Endothelial cell of umbilical vein (primary cell): ENCODE measurements at regions of chr1 and their contacts with region 1.

Region 1: GRCh38 chr1:99526926-99527477 is 118.9 kb upstream of the PALMD start:
- DNase-seq: peak; percentile 57
- H3K4me3 ChIP-seq: no peak overlapping the region
- H3K27ac ChIP-seq: no peak overlapping the region
- H3K4me1 ChIP-seq: no peaks in the 10 kb centered on the region
- H3K27me3 ChIP-seq: no peaks in the 10 kb centered on the region
- CTCF ChIP-seq: peak in 1 of 2 donors; percentile 21
- POLR2A ChIP-seq: no peak

Region 2: DNA sequence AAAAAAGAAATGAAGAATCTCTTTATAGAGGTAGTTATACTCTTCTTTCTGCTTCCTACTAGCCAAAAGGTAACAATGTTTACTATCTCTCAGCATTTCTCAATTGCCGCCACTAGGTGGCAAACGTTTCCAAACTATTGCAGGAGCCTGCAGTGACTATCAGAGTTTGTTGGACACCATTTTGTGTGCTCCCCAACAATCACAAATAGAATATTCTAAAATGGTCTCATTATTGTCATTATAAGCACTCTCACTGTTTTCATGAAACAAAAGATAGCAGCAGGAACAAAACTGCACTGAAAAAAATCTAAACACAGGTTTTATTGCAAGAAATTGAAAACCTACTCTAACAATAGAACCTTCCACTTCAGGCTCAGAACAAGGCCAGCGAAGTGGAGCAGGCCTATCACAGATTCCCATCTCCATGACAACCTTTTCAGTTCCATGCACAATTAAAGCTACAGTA is 346.6 kb before region 1 on chr1:
- CTCF ChIA-PET with region 1: interaction called, 20 read pairs
- POLR2A ChIA-PET with region 1: no interaction called
- dilution Hi-C with region 1: no loop called
- intact Hi-C with region 1: loop called (anchors 1 kb)
- DNase-seq: peak; percentile 90
- H3K4me3 ChIP-seq: no peak overlapping the region
- H3K27ac ChIP-seq: no peak overlapping the region
- H3K4me1 ChIP-seq: no peaks in the 10 kb centered on the region
- H3K27me3 ChIP-seq: no peaks in the 10 kb centered on the region
- CTCF ChIP-seq: peak; percentile 57 to 68
- POLR2A ChIP-seq: no peak

Region 3: GRCh38 chr1:99371413-99371812 is 155.6 kb before region 1 on chr1:
- CTCF ChIA-PET with region 1: no interaction called
- POLR2A ChIA-PET with region 1: no interaction called
- dilution Hi-C with region 1: no loop called
- intact Hi-C with region 1: no loop called
- DNase-seq: no peak
- H3K4me3 ChIP-seq: no peak overlapping the region
- H3K27ac ChIP-seq: no peak overlapping the region
- H3K4me1 ChIP-seq: no peaks in the 10 kb centered on the region
- H3K27me3 ChIP-seq: peaks cover 2% of the 10 kb centered on the region in 2 experiments
- CTCF ChIP-seq: no peak
- POLR2A ChIP-seq: no peak

Region 4: GRCh38 chr1:99384021-99384420 is 143.0 kb before region 1 on chr1:
- CTCF ChIA-PET with region 1: no interaction called
- POLR2A ChIA-PET with region 1: no interaction called
- dilution Hi-C with region 1: no loop called
- intact Hi-C with region 1: no loop called
- DNase-seq: no peak
- H3K4me3 ChIP-seq: no peak overlapping the region
- H3K27ac ChIP-seq: no peak overlapping the region
- H3K4me1 ChIP-seq: no peaks in the 10 kb centered on the region
- H3K27me3 ChIP-seq: no peaks in the 10 kb centered on the region
- CTCF ChIP-seq: no peak
- POLR2A ChIP-seq: no peak

Region 5: DNA sequence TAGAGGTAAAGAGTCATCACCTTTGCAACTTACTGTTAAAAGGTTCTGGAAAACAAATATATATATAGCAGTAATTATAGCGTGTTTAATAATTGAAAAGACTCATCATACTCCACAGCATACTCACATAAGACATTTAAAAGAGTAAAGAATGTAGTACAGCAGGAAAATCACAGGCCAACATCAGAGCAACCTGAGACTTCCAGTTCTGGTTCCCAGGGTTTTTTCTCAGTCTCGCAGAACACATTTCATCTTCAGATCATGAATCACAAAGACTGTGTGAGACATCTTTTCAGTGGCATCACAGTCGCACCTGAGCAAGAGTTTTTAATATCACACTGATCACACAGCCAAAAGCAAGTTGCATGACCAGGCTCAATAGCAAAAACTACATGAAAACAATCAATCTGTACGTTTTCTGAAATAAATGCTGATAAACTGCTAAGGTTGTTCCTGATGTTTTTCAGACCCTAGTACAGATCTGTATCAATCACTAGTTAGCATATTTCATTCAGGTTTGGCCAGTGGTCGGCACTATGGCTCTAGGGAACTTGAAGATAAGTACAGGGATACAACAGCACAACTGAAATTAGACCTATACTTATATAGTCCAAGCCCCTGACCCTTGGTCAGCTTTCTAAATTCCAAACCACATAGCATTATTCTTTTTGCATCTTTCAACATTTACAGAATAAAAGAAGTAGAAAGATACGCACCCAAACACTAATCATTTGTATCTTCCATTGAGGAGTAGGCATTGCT is 120.2 kb before region 1 on chr1:
- CTCF ChIA-PET with region 1: no interaction called
- POLR2A ChIA-PET with region 1: no interaction called
- dilution Hi-C with region 1: no loop called
- intact Hi-C with region 1: no loop called
- DNase-seq: peak; percentile 17
- H3K4me3 ChIP-seq: no peak overlapping the region
- H3K27ac ChIP-seq: no peak overlapping the region
- H3K4me1 ChIP-seq: no peaks in the 10 kb centered on the region
- H3K27me3 ChIP-seq: peaks cover 0 to 2% of the 10 kb centered on the region in 2 experiments
- CTCF ChIP-seq: no peak
- POLR2A ChIP-seq: no peak

Region 6: GRCh38 chr1:99496067-99496466 is 30.9 kb before region 1 on chr1:
- CTCF ChIA-PET with region 1: interaction called, 8 read pairs
- POLR2A ChIA-PET with region 1: no interaction called
- dilution Hi-C with region 1: no loop called
- intact Hi-C with region 1: loop called (anchors 2 kb)
- DNase-seq: no peak
- H3K4me3 ChIP-seq: no peak overlapping the region
- H3K27ac ChIP-seq: no peak overlapping the region
- H3K4me1 ChIP-seq: no peaks in the 10 kb centered on the region
- H3K27me3 ChIP-seq: no peaks in the 10 kb centered on the region
- CTCF ChIP-seq: no peak
- POLR2A ChIP-seq: no peak

Region 7: DNA sequence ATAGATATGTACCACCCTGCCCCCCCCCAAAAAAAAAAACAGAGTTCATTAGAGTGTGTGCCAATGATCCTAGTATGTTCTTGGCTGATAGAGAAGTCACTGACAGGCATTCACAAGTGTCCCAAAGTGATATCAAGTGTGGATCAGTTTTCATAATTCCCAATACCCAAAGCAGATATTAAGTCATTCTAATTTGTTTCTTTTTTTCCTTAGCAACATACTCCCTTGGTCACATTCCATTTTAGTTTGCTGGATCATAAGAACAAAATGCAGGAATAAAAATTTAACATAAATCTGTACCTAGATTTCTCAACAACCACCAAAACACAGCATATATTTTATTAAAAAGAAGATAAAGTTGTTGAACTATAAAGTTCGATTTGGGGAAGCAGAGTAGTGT is 10.9 kb before region 1 on chr1:
- CTCF ChIA-PET with region 1: no interaction called
- POLR2A ChIA-PET with region 1: no interaction called
- dilution Hi-C with region 1: no loop called
- intact Hi-C with region 1: no loop called
- DNase-seq: no peak
- H3K4me3 ChIP-seq: no peak overlapping the region
- H3K27ac ChIP-seq: no peak overlapping the region
- H3K4me1 ChIP-seq: no peaks in the 10 kb centered on the region
- H3K27me3 ChIP-seq: no peaks in the 10 kb centered on the region
- CTCF ChIP-seq: no peak
- POLR2A ChIP-seq: no peak

Region 8: GRCh38 chr1:99544328-99544727 is 17.3 kb after region 1 on chr1:
- CTCF ChIA-PET with region 1: interaction called, 12 read pairs
- POLR2A ChIA-PET with region 1: no interaction called
- dilution Hi-C with region 1: no loop called
- intact Hi-C with region 1: no loop called
- DNase-seq: peak; percentile 87
- H3K4me3 ChIP-seq: no peak overlapping the region
- H3K27ac ChIP-seq: peak overlapping the region; percentile 54
- H3K4me1 ChIP-seq: peaks cover 49% of the 10 kb centered on the region
- H3K27me3 ChIP-seq: no peaks in the 10 kb centered on the region
- CTCF ChIP-seq: no peak
- POLR2A ChIP-seq: no peak